AG04450 (cell line): ENCODE measurements at regions of chr20 and their contacts with region 1.

Region 1: DNA sequence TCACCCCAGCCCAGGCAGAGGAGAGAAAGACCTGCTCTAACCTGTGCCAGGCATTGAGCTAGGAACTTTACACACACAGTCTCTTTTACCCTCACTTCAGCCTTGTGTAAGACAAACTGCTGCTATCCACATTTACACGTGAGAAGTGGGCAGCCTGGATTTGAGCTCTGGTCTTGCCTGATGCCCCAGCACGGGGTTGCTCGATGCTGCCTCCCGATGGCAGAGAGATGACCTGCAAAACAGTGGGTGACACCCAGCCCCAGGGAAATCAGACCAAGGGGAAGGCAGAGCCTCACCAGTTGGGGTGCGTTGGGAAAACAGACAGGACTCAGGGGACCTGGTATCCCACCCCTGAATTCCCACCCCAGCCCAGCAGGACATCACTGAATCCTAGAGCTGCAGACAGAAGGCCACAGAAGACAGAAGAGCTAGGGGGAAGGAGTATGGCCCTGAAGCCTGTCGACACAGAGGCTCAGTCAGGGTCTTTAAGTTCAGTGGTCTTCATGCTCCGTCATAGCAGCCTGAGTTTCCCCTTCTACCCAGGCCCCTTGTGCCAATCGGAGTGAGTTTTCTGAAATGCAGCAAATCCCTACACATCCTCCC is 990 bp downstream of the BPI start:
- DNase-seq: no peak
- H3K4me3 ChIP-seq: no peak overlapping the region
- H3K27ac ChIP-seq: no peak overlapping the region
- H3K27me3 ChIP-seq: peaks cover 20% of the 10 kb centered on the region
- CTCF ChIP-seq: peak; percentile 65

Region 2: DNA sequence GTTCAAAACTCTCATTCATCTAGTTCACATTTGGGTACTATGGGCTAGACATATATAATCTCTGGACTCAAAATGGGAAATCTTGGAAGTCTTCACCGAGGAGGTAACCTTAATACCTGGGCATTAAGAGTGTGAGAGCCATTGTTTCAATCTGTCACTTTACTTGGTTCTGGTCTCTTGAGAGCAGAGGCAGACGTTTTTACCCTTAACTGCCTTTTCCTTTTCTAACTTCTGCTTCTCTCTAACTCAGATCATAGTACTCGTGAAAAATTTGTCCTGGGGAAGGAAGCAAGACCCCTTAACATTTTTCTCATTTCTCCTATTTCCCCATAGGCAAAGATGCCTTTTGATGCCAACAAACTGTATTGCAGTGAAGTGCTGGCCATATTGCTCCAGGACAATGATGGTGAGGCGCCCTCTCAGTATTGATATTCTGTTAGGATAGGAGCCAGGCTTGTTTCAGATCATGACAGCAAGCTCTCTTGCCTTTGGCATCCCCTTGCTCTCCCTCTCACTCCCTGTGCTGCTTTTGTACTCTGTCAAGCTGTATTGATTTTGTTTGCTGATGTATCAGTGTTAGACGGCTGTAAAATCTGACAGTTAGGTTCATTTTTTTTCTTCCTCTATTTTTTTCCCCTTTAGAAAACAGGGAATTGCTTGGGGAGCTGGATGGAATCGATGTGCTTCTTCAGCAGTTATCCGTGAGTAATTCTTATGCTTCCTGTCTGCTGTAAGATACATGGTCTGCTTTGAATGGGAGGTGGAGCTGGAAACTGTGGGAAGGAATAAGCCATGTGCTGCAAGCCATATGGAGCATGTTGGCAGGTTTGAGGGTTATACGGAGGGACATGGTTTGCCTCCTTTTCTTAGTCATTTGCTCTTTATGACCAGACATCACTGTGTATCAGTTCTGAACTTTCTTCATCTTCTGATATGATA is 527.7 kb before region 1 on chr20:
- CTCF ChIA-PET with region 1: interaction called, 13 read pairs
- POLR2A ChIA-PET with region 1: no interaction called
- DNase-seq: no peak
- H3K4me3 ChIP-seq: no peak overlapping the region
- H3K27ac ChIP-seq: no peak overlapping the region
- H3K27me3 ChIP-seq: no peaks in the 10 kb centered on the region
- CTCF ChIP-seq: no peak

Region 3: DNA sequence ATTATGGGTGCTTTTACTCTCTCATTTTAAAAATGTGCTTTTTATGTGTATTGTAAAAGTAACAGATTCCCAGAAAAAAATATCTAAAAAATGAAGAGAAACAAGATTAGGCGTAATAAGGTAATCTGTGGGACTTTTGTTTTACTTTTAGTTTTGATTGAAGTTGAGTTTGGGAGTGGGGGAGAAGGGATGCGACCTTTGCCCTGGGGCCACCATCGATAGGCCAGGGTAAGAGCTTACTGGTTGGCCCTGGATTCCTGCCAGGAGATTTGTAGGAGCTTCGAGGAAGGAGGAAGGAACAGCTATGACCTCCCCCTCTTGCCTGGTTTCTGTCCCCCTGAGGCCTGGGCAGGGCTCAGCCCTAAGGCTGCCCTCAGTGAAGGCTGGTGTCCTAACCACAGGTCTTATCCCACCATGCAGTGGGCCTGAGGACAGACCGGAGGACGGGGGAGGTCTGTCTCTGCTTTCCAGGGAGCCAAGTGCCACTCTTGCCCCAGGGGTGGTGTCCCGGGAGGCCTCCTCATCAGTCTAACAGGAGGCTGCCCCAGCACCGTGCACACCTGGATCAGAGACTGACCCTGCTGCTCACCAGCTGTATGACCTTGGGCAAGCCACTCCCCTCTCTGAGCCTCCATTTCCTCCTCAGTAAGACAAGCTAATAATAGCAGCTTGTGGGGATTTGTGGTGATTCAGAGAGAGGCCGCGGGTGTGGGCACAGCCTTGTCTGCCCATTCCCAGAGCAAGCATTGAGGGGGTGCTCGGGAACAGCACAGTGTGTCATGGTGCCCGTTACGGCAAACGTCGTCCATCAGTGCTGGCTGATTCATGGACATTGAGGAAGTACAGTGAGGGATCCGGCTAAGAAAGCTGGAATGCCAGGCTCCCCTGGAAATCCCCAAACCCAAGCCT is 161.0 kb before region 1 on chr20:
- CTCF ChIA-PET with region 1: no interaction called
- POLR2A ChIA-PET with region 1: no interaction called
- DNase-seq: peak; percentile 48
- H3K4me3 ChIP-seq: no peak overlapping the region
- H3K27ac ChIP-seq: peak overlapping the region; percentile 91
- H3K27me3 ChIP-seq: no peaks in the 10 kb centered on the region
- CTCF ChIP-seq: no peak

Region 4: DNA sequence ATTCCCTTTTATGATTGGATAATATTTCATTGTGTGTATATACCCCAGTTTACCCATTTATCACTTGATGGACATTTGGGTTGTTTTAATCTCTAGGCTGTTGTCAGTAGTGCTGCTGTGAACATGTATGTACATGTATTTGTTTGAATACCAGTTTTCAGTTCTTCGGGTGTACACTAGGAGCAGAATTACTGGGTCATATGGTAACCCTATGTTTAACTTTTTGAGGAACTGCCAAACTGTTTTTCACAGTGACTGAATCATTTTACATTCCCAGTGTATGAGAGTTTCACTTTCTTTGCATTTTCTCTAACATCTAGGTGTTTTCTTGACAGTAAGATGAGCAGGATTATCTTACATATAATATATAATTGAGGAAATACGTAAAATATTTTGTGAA is 231.4 kb after region 1 on chr20:
- CTCF ChIA-PET with region 1: interaction called, 10 read pairs
- POLR2A ChIA-PET with region 1: no interaction called
- DNase-seq: no peak
- H3K4me3 ChIP-seq: no peak overlapping the region
- H3K27ac ChIP-seq: no peak overlapping the region
- H3K27me3 ChIP-seq: no peaks in the 10 kb centered on the region
- CTCF ChIP-seq: peak; percentile 30